GM12878 (cell line): ENCODE measurements at regions of chr19 and their contacts with region 1.

Region 1: DNA sequence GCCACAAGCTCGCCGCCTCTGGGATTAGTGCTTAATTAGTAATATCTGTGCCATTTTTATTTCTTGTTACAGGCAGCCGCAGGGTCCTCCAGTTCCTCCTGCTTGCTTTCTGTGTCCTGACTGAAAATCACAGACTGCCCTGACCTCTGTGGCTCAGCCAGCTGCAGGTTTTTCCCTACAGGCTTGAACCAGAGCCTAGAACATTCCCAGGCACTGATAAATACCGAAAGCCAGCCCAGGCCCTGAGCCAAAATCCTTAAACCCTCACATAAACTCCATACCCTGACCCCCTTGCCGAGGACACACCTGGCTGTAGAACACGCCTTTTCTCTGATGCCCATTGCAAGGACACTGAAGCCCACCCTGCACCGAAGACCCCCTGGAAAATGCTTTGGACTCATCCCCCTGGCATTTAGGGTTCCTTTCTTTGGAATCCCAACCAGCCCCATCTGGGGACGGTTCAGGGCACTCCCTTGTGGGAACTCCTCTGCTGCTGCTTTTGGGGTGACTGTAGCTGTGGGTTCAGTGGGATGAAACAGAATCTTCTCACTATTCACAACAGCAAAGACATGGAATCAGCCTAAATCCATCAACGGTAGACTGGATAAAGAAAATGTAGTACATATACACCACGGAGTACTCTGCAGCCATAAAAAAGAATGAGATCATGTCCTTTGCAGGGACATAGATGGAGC is 15.5 kb downstream of the DPP9 start:
- DNase-seq: no peak
- ATAC-seq: no peak
- H3K4me3 ChIP-seq: no peak overlapping the region
- H3K27ac ChIP-seq: no peak overlapping the region
- H3K4me1 ChIP-seq: peaks cover 17% of the 10 kb centered on the region
- H3K27me3 ChIP-seq: no peaks in the 10 kb centered on the region
- CTCF ChIP-seq: no peak
- EP300 ChIP-seq: no peak
- POLR2A ChIP-seq: no peak
- RAD21 ChIP-seq: no peak

Region 2: GRCh38 chr19:4669723-4670480 is 38.2 kb before region 1 on chr19 and contains the start of gene MYDGF:
- CTCF ChIA-PET with region 1: no interaction called
- POLR2A ChIA-PET with region 1: no interaction called
- RAD21 ChIA-PET with region 1: no interaction called
- SMC1A ChIA-PET with region 1: interaction called, 3 read pairs
- in situ Hi-C with region 1: no loop called
- intact Hi-C with region 1: loop called (anchors 2 kb)
- DNase-seq: peak; percentile 33
- ATAC-seq: peak; percentile 99
- H3K4me3 ChIP-seq: peak within 1 kb of the TSS; percentile 84
- H3K27ac ChIP-seq: peak within 1 kb of the TSS; percentile 38
- H3K4me1 ChIP-seq: no peaks in the 10 kb centered on the region
- H3K27me3 ChIP-seq: no peaks in the 10 kb centered on the region
- CTCF ChIP-seq: no peak
- EP300 ChIP-seq: no peak
- POLR2A ChIP-seq: peak; percentile 98
- RAD21 ChIP-seq: no peak
- polyA plus RNA-seq, gene MYDGF: 2.3 to 18.5 TPM